Mucosa of descending colon (tissue), 3 donors: ENCODE measurements at regions of chr15 and their contacts with region 1.

Region 1: DNA sequence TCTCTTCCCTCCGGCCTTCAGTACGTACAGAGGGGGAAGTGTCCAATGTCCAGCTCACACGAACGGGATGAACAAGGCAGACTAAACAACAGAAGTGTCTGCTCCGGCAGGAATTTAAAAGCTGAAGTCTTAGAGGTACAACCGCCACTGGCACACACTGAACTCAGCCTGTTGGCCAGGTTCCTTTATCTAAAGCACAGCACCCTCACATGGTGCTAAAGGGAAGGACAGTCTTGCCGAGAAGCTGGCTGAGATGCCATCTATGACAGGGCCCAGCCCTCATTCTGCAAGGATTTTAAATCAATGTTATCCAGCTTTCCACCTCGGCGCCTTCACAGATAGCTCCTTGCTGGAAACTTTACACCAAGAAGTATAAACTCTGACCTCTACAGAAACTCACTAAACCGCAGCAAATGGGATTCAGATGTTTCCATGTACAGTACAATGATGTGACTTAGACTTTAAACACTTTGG is 2.8 kb downstream of the ADAMTS17 start:
- DNase-seq: peak in 2 of 3 donors; percentile 65 to 87
- ATAC-seq: peak; percentile 72
- H3K4me3 ChIP-seq: no peak overlapping the region
- H3K4me1 ChIP-seq: peaks cover 10% of the 10 kb centered on the region
- CTCF ChIP-seq: peak; percentile 66

Region 2: DNA sequence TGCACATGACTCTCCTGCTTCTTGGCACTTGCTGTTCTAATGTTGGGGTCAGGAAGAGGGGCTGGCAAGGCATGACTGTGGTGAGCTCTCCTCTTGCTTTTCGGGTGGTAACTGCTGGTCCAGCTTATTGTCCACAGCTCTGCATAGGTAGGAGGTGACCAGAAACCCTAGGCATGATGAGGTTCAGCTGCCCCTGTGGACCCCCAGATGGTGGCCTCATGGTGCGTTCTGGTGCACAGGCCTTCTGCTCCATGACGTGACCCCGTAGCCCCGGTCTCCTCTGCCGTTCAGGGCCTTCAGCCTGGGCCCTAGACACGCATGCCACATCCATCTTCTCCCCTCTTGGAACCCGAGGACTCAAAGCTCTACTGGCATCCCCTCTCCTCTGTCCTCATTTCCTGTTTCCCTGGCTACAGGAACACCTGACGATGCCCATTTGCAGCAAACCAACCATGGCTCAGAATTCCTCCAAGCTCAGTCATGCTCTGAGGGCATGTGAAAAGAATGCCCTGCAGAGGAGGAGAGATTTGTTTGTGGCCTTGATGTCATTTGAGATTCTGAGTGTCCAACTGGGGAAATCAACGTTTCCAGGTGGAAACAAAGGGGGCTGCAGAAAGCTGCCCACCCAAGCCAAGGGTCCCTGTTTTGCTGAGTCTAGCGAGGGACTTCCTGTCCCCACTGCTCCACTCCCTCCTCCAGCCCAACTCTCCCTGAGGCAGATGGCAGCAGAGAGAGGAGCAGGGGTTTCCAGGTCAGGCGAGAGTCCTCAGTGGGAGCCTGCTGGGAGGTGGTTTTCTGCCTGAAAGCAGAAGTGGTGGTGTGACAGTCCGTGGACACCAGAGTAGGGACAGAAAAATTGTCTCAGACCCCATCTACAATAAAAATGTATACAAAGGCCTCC is 407.1 kb before region 1 on chr15:
- intact Hi-C with region 1: loop called in 1 of 2 experiments (anchors 10 kb)
- DNase-seq: no peak
- ATAC-seq: no peak
- H3K4me3 ChIP-seq: no peak overlapping the region
- H3K4me1 ChIP-seq: peaks cover 6% of the 10 kb centered on the region
- CTCF ChIP-seq: no peak